A673 (cell line): ENCODE measurements at regions of chr2 and their contacts with region 1.

Region 1: DNA sequence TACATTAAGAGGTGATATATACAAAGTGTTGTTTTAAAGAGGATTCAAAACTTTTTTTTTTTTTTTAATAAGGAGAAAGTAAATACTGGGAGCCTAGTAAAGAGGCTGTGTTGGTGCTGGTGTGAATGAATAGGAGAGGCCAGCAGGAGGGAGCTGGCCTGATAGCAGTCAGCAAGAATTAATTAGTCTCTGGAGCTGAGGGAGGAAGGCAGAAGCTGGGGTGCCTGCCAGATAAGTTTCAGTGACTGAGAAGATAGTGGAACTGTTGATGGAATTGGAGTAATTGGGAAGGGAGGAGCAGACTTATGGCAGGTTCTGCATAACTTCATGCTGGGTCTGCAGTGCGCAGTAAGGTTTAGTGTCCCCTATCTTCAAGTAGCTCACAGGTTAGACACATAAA is 36.2 kb upstream of the SNORC start:
- DNase-seq: peak; percentile 20
- H3K4me3 ChIP-seq: no peak overlapping the region
- H3K27ac ChIP-seq: no peak overlapping the region
- H3K4me1 ChIP-seq: peaks cover 21% of the 10 kb centered on the region
- H3K27me3 ChIP-seq: no peaks in the 10 kb centered on the region
- CTCF ChIP-seq: no peak

Region 2: GRCh38 chr2:233064530-233065199 is 230.8 kb after region 1 on chr2:
- CTCF ChIA-PET with region 1: no interaction called
- POLR2A ChIA-PET with region 1: interaction called, 19 read pairs
- intact Hi-C with region 1: no loop called
- DNase-seq: no peak
- H3K4me3 ChIP-seq: no peak overlapping the region
- H3K27ac ChIP-seq: no peak overlapping the region
- H3K4me1 ChIP-seq: no peaks in the 10 kb centered on the region
- H3K27me3 ChIP-seq: no peaks in the 10 kb centered on the region
- CTCF ChIP-seq: no peak